GM12878 (cell line): ENCODE measurements at regions of chr5 and their contacts with region 1.

Region 1: GRCh38 chr5:111278845-111279504 is 54.8 kb downstream of the CAMK4 start:
- DNase-seq: peak; percentile 33
- ATAC-seq: peak; percentile 97
- H3K4me3 ChIP-seq: no peak overlapping the region
- H3K27ac ChIP-seq: no peak overlapping the region
- H3K4me1 ChIP-seq: 0 out of 2 replicates have a peak, but pooled peaks cover 4% of the 10 kb centered on the region
- H3K27me3 ChIP-seq: no peaks in the 10 kb centered on the region
- CTCF ChIP-seq: peak; percentile 76 to 93 (median 79)
- EP300 ChIP-seq: no peak
- POLR2A ChIP-seq: no peak
- RAD21 ChIP-seq: peak; percentile 80

Region 2: GRCh38 chr5:110757118-110757729 is 521.8 kb before region 1 on chr5:
- CTCF ChIA-PET with region 1: interaction called, 5 read pairs
- POLR2A ChIA-PET with region 1: no interaction called
- RAD21 ChIA-PET with region 1: interaction called, 6 read pairs
- SMC1A ChIA-PET with region 1: no interaction called
- in situ Hi-C with region 1: loop called (anchors 10 kb)
- intact Hi-C with region 1: loop called (anchors 10 kb)
- DNase-seq: no peak
- ATAC-seq: peak; percentile 10; the same call in 1 of the 3 replicates
- H3K4me3 ChIP-seq: no peak overlapping the region
- H3K27ac ChIP-seq: no peak overlapping the region
- H3K4me1 ChIP-seq: peaks cover 17% of the 10 kb centered on the region; the same call in 1 of the 2 replicates
- H3K27me3 ChIP-seq: no peaks in the 10 kb centered on the region
- CTCF ChIP-seq: peak; percentile 60 to 64 (median 60)
- EP300 ChIP-seq: no peak
- POLR2A ChIP-seq: no peak
- RAD21 ChIP-seq: peak; percentile 76

Region 3: GRCh38 chr5:111158105-111158744 is 120.8 kb before region 1 on chr5:
- CTCF ChIA-PET with region 1: interaction called, 339 read pairs
- POLR2A ChIA-PET with region 1: interaction called, 5 read pairs
- RAD21 ChIA-PET with region 1: interaction called, 198 read pairs
- SMC1A ChIA-PET with region 1: interaction called, 324 read pairs
- in situ Hi-C with region 1: loop called (anchors 5 kb)
- intact Hi-C with region 1: loop called (anchors 1 kb)
- DNase-seq: peak; percentile 64
- ATAC-seq: peak; percentile 93
- H3K4me3 ChIP-seq: no peak overlapping the region
- H3K27ac ChIP-seq: no peak overlapping the region
- H3K4me1 ChIP-seq: no peaks in the 10 kb centered on the region
- H3K27me3 ChIP-seq: no peaks in the 10 kb centered on the region
- CTCF ChIP-seq: peak; percentile 99 to 100 (median 100); a peak in 5 of 6 replicates
- EP300 ChIP-seq: no peak
- POLR2A ChIP-seq: no peak
- RAD21 ChIP-seq: peak; percentile 99

Region 4: GRCh38 chr5:111197523-111197922 is 81.5 kb before region 1 on chr5:
- CTCF ChIA-PET with region 1: interaction called, 4 read pairs
- POLR2A ChIA-PET with region 1: no interaction called
- RAD21 ChIA-PET with region 1: interaction called, 5 read pairs
- SMC1A ChIA-PET with region 1: interaction called, 11 read pairs
- in situ Hi-C with region 1: no loop called
- intact Hi-C with region 1: no loop called
- DNase-seq: no peak
- ATAC-seq: no peak
- H3K4me3 ChIP-seq: no peak overlapping the region
- H3K27ac ChIP-seq: no peak overlapping the region
- H3K4me1 ChIP-seq: peaks cover 13% of the 10 kb centered on the region
- H3K27me3 ChIP-seq: no peaks in the 10 kb centered on the region
- CTCF ChIP-seq: no peak
- EP300 ChIP-seq: no peak
- POLR2A ChIP-seq: no peak
- RAD21 ChIP-seq: no peak

Region 5: DNA sequence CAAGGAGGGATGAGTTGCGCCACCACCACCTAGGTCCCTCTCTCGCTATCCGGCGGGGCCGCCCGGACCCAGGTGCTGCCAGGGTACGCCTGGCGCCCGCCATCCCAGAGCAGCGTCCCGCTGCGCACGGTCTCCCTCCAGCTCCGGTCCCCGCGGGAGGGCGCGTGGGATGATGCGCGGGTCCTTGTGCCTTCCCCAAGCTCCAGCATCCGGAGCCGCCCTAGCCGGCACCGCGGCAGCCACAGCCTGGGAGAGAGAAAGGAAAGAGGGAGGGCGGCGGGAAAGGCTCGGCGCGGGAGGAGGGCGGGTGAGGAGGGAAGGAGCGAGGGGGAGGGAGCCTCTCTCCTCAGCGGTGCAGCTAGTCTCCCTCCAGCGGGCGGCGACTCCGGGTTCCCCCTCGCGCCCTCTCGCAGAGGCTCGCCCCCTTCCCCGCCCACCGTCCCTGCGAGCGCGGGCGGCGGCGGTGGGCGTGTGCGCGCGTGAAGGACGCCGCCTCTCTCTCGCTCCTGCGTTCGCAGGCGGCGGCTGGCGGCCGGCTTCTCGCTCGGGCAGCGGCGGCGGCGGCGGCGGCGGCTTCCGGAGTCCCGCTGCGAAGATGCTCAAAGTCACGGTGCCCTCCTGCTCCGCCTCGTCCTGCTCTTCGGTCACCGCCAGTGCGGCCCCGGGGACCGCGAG is 54.9 kb before region 1 on chr5 and contains the start of gene CAMK4:
- CTCF ChIA-PET with region 1: interaction called, 109 read pairs
- POLR2A ChIA-PET with region 1: interaction called, 5 read pairs
- RAD21 ChIA-PET with region 1: interaction called, 62 read pairs
- SMC1A ChIA-PET with region 1: interaction called, 157 read pairs
- in situ Hi-C with region 1: no loop called
- intact Hi-C with region 1: loop called (anchors 1 kb)
- DNase-seq: no peak
- ATAC-seq: peak; percentile 79
- H3K4me3 ChIP-seq: peak within 1 kb of the TSS; percentile 83
- H3K27ac ChIP-seq: peak within 1 kb of the TSS; percentile 85
- H3K4me1 ChIP-seq: peaks cover 12% of the 10 kb centered on the region
- H3K27me3 ChIP-seq: no peaks in the 10 kb centered on the region
- CTCF ChIP-seq: peak; percentile 12 to 35 (median 32); a peak in 2 of 6 replicates
- EP300 ChIP-seq: no peak
- POLR2A ChIP-seq: peak; percentile 67
- RAD21 ChIP-seq: peak; percentile 36
- polyA plus RNA-seq, gene CAMK4: 13.3 to 15.0 TPM

Region 6: DNA sequence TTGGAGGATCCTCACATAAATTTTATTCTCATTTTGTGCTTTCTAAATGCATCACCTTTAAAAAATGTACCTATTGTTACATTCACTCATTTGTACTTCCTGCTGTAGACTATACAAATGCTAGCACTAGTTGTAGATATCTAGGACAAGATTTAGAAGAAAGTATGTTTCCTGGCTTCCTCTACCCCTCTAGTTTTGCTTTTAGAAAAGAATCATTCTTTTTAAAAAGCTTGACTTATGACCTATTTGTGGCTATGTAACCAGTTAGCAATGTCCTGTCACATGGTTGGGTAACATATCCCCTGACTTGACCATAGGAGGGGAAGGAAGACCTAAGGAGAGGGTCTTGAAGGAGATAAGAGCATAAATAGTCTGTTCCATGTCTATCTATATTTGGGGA is 41.5 kb before region 1 on chr5:
- CTCF ChIA-PET with region 1: interaction called, 17 read pairs
- POLR2A ChIA-PET with region 1: no interaction called
- RAD21 ChIA-PET with region 1: interaction called, 20 read pairs
- SMC1A ChIA-PET with region 1: interaction called, 157 read pairs
- in situ Hi-C with region 1: no loop called
- intact Hi-C with region 1: no loop called
- DNase-seq: no peak
- ATAC-seq: peak; percentile 5
- H3K4me3 ChIP-seq: no peak overlapping the region
- H3K27ac ChIP-seq: peak overlapping the region; percentile 79
- H3K4me1 ChIP-seq: peaks cover 45% of the 10 kb centered on the region
- H3K27me3 ChIP-seq: no peaks in the 10 kb centered on the region
- CTCF ChIP-seq: no peak
- EP300 ChIP-seq: no peak
- POLR2A ChIP-seq: no peak
- RAD21 ChIP-seq: no peak

Region 7: GRCh38 chr5:111266491-111266890 is 12.5 kb before region 1 on chr5:
- CTCF ChIA-PET with region 1: interaction called, 14 read pairs
- POLR2A ChIA-PET with region 1: no interaction called
- RAD21 ChIA-PET with region 1: interaction called, 5 read pairs
- SMC1A ChIA-PET with region 1: interaction called, 8 read pairs
- in situ Hi-C with region 1: no loop called
- intact Hi-C with region 1: no loop called
- DNase-seq: no peak
- ATAC-seq: no peak
- H3K4me3 ChIP-seq: no peak overlapping the region
- H3K27ac ChIP-seq: no peak overlapping the region
- H3K4me1 ChIP-seq: 0 out of 2 replicates have a peak, but pooled peaks cover 3% of the 10 kb centered on the region
- H3K27me3 ChIP-seq: no peaks in the 10 kb centered on the region
- CTCF ChIP-seq: no peak
- EP300 ChIP-seq: no peak
- POLR2A ChIP-seq: no peak
- RAD21 ChIP-seq: no peak

Region 8: DNA sequence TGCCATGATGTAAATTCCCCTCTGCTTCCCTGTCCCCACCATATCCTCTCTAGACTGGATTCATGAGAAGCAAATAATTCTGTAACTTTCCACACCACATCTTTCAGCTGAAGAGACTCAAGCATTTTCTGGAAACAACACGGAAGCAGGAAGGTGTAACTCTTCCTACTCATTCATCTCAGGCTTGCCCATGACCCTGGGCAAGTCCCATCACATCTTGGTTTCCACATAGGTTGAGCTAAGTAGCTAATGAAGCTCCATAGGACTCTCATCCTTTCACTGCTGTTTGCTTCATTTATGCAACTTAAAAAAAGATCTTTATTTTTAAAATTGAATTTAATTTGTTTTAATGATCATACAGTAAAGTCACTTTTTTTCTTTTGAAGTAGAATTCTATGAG is 266.1 kb after region 1 on chr5:
- CTCF ChIA-PET with region 1: no interaction called
- POLR2A ChIA-PET with region 1: no interaction called
- RAD21 ChIA-PET with region 1: no interaction called
- SMC1A ChIA-PET with region 1: no interaction called
- in situ Hi-C with region 1: no loop called
- intact Hi-C with region 1: no loop called
- DNase-seq: no peak
- ATAC-seq: no peak
- H3K4me3 ChIP-seq: no peak overlapping the region
- H3K27ac ChIP-seq: no peak overlapping the region
- H3K4me1 ChIP-seq: no peaks in the 10 kb centered on the region
- H3K27me3 ChIP-seq: no peaks in the 10 kb centered on the region
- CTCF ChIP-seq: no peak
- EP300 ChIP-seq: no peak
- POLR2A ChIP-seq: no peak
- RAD21 ChIP-seq: no peak

Region 9: DNA sequence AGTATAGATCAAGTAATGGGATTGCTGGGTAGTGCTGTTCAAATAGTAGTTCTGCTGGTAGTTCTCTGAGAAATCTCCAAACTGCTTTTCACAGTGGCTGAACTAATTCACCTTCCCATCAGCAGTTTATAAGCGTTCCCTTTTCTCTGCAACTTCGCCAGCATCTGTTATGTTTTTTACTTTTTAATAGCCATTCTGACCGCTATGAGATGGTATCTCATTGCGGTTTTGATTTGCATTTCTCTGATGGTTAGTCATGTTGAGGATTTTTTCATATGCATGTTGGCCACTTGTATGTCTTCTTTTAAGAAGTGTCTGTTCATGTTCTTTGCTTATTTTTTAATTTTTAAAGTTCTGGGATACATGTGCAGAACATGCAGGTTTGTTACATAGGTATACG is 757.2 kb after region 1 on chr5:
- CTCF ChIA-PET with region 1: no interaction called
- POLR2A ChIA-PET with region 1: no interaction called
- RAD21 ChIA-PET with region 1: no interaction called
- SMC1A ChIA-PET with region 1: no interaction called
- in situ Hi-C with region 1: no loop called
- intact Hi-C with region 1: no loop called
- DNase-seq: no peak
- ATAC-seq: no peak
- H3K4me3 ChIP-seq: no peak overlapping the region
- H3K27ac ChIP-seq: no peak overlapping the region
- H3K4me1 ChIP-seq: no peaks in the 10 kb centered on the region
- H3K27me3 ChIP-seq: no peaks in the 10 kb centered on the region
- CTCF ChIP-seq: no peak
- EP300 ChIP-seq: no peak
- POLR2A ChIP-seq: no peak
- RAD21 ChIP-seq: no peak